ENCODE measurements at regions of chr7 and their contacts with region 1.

Region 1: GRCh38 chr7:70829221-70830059 is 302.5 kb upstream of the GALNT17 start:
- ATAC-seq: peak; percentile 80 to 94 (median 91)
- H3K4me3 ChIP-seq: peak overlapping the region in 3 of 5 donors; percentile 5 to 17 (median 10)
- H3K27ac ChIP-seq: no peak overlapping the region
- H3K4me1 ChIP-seq: no peaks in the 10 kb centered on the region

Region 2: DNA sequence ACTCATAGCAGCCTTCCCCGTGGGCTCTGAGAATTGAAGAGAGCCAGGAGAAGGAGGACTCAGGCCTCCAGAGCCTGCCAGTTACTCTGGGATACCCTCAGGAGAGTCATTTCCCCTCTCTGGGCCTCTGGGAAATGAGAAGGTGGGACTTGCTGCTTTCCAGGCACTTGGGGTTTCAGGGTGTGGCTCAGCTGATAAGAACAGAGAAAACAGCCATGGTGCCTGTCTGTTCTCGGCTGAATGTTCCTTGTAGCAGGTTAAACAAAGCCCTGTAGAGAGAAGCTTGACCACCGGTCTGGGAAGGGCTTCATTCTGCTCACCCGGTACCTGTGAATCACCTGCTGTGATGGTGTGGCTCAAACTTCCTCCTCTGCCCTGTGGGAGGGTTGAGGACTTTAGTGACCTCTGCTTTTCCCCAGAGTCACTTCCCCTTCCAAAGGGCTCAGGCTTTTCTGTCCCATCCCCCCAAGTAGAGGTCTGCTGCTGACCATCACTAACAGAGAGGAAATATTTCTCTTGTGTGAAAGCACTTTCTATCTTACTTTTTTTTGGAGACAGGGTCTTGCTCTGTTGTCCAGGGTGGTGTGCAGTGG is 90.1 kb after region 1 on chr7:
- in situ Hi-C with region 1: no loop called
- ATAC-seq: no peak
- H3K4me3 ChIP-seq: no peak overlapping the region
- H3K27ac ChIP-seq: no peak overlapping the region
- H3K4me1 ChIP-seq: no peaks in the 10 kb centered on the region

Region 3: DNA sequence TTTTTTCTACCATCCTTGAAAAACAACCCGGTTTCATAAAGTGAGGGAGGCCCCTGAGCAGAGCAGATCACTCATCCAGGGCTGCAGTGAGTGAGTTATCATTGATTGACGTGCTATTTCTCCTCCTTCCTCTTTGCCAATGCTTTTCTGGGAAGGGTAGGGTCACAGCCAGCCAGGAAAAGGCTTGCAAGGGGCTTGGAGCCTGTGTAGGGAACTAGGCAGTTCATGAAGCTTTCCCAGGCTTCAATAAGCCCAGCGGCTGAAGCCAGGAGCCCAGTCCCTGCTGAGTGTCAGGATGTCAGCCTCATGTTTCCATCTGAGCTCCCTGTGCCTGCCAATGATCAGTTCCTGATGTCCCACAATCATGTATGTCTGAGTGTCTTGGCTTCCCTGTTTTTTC is 887.2 kb after region 1 on chr7:
- in situ Hi-C with region 1: loop called in 1 of 9 experiments (anchors 10 kb)
- ATAC-seq: peak in 4 of 8 experiments; percentile 12 to 75 (median 62)
- H3K4me3 ChIP-seq: no peak overlapping the region
- H3K27ac ChIP-seq: peak overlapping the region in 1 of 2 donors; percentile 20
- H3K4me1 ChIP-seq: peaks cover 0 to 8% of the 10 kb centered on the region in 2 donors

Region 4: GRCh38 chr7:71854546-71855397 is 1025.3 kb after region 1 on chr7:
- in situ Hi-C with region 1: no loop called
- ATAC-seq: no peak
- H3K4me3 ChIP-seq: no peak overlapping the region
- H3K27ac ChIP-seq: no peak overlapping the region
- H3K4me1 ChIP-seq: no peaks in the 10 kb centered on the region